ENCODE measurements at regions of chr2 and their contacts with region 1.

Region 1: GRCh38 chr2:99489761-99490622 is at the start of gene REV1:
- ATAC-seq: peak; percentile 73 to 88 (median 86)
- H3K4me3 ChIP-seq: peak within 1 kb of the TSS; percentile 71 to 99 (median 78)
- H3K27ac ChIP-seq: peak within 1 kb of the TSS; percentile 93 to 97
- H3K4me1 ChIP-seq: peaks cover 3 to 8% of the 10 kb centered on the region in 2 donors
- total RNA-seq, gene REV1: 18.8 to 66.7 (median 34.5) TPM

Region 2: DNA sequence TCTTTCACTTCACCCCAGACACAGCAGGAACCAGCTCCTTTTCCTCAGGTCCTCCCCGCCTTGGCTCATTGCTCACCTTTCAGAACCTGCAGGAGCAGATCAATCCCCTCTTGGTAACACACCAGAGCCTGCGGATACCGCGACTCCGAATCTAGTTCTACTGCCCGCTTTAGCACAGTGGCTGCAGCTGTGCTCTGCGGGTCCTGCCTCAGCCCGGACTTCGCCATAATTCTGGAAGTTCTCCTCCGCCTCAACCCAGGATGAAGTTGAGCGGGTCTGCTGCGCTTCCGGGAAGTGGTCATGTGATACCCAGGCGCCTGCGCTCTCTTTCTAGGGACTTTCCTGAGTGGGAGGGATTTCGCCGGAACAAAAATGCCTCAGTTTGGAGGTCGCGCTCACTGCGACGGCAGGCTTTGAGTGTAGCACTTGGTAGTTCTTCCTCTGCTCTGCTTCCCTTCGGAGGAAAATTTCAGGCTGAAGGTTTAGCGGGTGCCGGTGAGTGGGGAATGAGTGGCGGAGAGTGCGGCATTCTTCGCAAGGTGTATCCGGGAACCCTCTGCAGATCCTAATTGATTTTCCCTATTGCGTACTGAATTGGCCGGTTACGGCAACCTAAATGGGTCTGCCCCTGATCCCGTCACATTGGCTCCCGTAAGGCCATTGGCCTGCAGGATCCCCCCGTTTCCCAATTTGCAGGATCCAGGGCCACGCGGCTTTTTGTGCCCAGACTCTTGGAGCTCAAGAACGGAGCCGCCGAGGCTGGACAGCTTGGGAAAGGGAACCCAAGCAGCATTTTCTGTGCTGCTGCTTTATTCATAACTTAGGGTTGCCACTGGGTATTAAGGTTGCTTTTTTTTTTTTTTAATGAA is 309.0 kb before region 1 on chr2 and contains the starts of genes MITD1 and MRPL30:
- in situ Hi-C with region 1: loop called in 1 of 9 experiments (anchors 25 kb)
- ATAC-seq: peak; percentile 95 to 98 (median 97)
- H3K4me3 ChIP-seq: peak within 1 kb of the TSS; percentile 68 to 91 (median 75)
- H3K27ac ChIP-seq: peak within 1 kb of the TSS; percentile 80
- H3K4me1 ChIP-seq: peaks cover 11 to 15% of the 10 kb centered on the region in 2 donors
- total RNA-seq, gene MITD1: 16.2 to 51.1 (median 30.0) TPM
- total RNA-seq, gene MRPL30: 39.8 to 62.5 (median 53.3) TPM

Region 3: GRCh38 chr2:99710721-99711120 is 220.7 kb after region 1 on chr2:
- in situ Hi-C with region 1: no loop called
- ATAC-seq: peak in 2 of 8 experiments; percentile 27 to 56
- H3K4me3 ChIP-seq: no peak overlapping the region
- H3K27ac ChIP-seq: no peak overlapping the region
- H3K4me1 ChIP-seq: peaks cover 0 to 14% of the 10 kb centered on the region in 2 donors

Measured in motor neuron (in vitro differentiated cells).